Sciatic nerve (tissue), 2 donors: ENCODE measurements at regions of chr22 and their contacts with region 1.

Region 1: DNA sequence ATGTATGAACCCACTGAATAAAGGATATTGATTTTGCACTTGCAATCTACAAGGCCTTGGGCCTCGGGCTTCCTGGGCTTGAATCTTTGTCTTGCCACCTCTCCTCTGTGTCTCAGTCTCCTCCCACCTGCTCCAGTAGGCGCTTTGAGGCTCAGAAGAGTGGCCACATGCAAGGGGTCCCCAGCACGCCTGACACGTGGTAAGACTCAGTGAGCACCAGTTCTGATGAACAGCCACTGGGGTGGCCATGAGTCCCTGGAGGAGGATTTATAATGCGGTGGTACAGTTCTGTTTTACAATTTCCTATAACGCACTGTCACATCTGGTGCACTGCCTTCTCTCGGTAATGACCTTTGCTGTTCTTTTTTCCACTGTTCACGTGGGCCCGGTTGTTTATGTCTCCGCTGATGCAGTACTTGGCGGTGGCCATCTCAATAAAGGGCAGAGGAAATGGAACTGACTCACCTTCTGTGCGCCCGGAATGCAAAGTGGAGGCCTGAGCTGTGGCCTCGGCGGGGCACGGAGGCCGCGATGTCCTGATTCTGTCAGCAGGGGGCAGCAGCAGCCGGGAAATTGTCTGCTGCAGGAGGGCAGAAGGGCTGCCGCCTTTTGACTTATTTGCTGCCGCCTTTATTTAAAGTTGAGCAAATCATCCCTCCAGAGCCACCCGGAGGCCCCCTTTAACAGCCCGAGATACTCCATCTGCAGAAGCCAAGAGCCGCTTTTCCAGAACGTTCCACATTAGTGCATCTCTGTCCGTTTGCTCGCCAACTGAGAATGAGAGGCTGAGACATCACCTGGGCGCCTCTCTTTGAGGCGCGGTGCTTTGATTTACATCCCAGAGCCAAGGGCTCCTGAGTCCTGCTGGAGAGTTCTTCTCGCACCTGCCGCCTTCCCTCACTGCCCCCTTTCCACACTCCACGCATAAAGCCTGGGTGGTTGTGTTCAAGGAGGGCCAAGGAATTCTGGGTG is 6.0 kb upstream of the IFT27 start:
- DNase-seq: peak; percentile 86
- ATAC-seq: peak; percentile 90

Region 2: GRCh38 chr22:36562261-36562835 is 219.6 kb before region 1 on chr22:
- intact Hi-C with region 1: no loop called
- DNase-seq: no peak
- ATAC-seq: no peak

Region 3: GRCh38 chr22:36982136-36982535 is 200.2 kb after region 1 on chr22:
- intact Hi-C with region 1: loop called (anchors 5 kb)
- DNase-seq: no peak
- ATAC-seq: no peak